ENCODE measurements at regions of chr16 and their contacts with region 1.

Region 1: GRCh38 chr16:49491771-49492761 is 118.5 kb downstream of the C16orf78 start:
- DNase-seq: peak; percentile 51 to 63
- ATAC-seq: peak; percentile 78 to 92 (median 86)
- H3K4me3 ChIP-seq: peak overlapping the region in 9 of 10 donors; percentile 26 to 57 (median 45)
- H3K27ac ChIP-seq: peak overlapping the region in 7 of 10 donors; percentile 38 to 72 (median 59)
- H3K4me1 ChIP-seq: peaks cover 2 to 17% (median 13%) of the 10 kb centered on the region in 9 donors
- H3K27me3 ChIP-seq: peaks cover 0 to 3% (median 0%) of the 10 kb centered on the region in 7 donors
- CTCF ChIP-seq: peak; percentile 91 to 99 (median 98)

Region 2: DNA sequence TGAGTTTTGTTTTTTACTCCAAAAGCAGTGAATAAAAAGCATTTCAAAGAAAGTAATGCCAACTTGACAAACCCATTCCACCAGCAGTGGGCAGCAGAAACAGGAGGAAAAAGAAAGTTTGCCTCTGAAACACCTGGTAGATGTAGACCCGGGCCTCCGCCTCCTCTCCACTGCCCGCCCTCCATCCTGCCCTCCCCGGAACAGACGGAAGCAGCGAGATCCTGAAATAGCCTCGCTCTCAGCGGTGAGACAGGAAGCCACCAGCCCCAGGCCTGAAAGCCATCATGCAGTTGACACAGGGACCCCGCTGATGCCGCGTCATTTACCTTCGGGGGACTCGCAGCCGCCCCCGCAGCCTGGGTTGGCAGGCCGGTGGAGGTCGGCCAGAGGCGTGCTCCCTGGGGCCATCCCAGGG is 50.7 kb before region 1 on chr16:
- intact Hi-C with region 1: loop called in 1 of 10 experiments (anchors 5 kb)
- DNase-seq: peak; percentile 41 to 77
- ATAC-seq: peak; percentile 68 to 96 (median 92)
- H3K4me3 ChIP-seq: peak overlapping the region in 5 of 10 donors; percentile 13 to 32 (median 19)
- H3K27ac ChIP-seq: peak overlapping the region; percentile 6 to 86 (median 68)
- H3K4me1 ChIP-seq: peaks cover 0 to 44% (median 16%) of the 10 kb centered on the region in 9 donors
- H3K27me3 ChIP-seq: peaks cover 0 to 11% (median 0%) of the 10 kb centered on the region in 7 donors
- CTCF ChIP-seq: peak in 7 of 9 donors; percentile 17 to 65 (median 43)

Region 3: DNA sequence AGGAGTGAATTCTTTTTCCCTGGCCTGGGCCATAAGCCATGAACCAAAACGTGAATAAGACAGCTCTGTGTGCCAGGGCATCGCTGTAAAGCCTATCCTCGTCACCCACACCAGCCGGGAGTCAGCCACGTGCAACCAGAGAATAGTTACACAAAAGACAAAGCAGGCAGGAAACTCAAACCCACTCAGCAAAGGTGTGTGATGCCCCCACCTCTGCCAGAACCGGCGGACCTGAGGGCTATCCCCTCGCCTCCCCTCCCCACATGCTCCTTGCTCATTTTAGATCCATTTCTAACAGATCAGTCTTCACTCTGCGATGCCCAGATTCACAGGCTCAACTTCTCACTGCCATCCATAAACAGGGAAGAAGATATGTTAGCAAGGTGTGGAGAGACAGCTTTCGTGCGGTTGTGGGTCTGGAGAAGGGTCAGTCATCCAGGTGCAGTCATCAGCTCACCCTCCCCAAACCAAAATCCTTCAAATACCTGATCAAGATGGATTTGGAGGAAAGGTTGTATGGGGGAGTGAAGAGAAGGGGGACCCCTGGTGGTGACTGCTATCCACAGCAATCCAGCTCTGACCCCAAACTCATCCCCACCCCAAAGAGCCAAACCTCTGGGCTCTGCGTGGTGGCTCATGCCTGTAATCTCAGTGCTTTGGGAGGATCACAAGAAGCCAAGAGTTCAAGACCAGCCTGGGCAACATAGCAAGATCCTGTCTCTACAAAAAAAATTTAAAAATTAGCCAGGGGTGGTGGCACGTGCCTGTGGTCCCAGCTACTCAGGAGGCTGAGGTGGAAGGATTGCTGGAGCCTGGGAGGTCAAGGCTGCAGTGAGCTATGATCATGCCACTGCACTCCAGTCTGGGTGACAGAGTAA is 100.7 kb after region 1 on chr16:
- intact Hi-C with region 1: loop called in 8 of 10 experiments (anchors 2 to 10 kb)
- DNase-seq: peak in 1 of 2 donors; percentile 18
- ATAC-seq: peak in 4 of 8 donors; percentile 54 to 62 (median 60)
- H3K4me3 ChIP-seq: no peak overlapping the region
- H3K27ac ChIP-seq: no peak overlapping the region
- H3K4me1 ChIP-seq: peaks cover 0 to 42% (median 20%) of the 10 kb centered on the region in 9 donors
- H3K27me3 ChIP-seq: peaks cover 0 to 5% (median 0%) of the 10 kb centered on the region in 7 donors
- CTCF ChIP-seq: peak; percentile 53 to 82 (median 79)

Region 4: GRCh38 chr16:49755313-49755620 is 263.2 kb after region 1 on chr16:
- intact Hi-C with region 1: loop called in 3 of 10 experiments (anchors 10 kb)
- DNase-seq: peak in 1 of 2 donors; percentile 30
- ATAC-seq: peak; percentile 51 to 89 (median 77)
- H3K4me3 ChIP-seq: peak overlapping the region in 9 of 10 donors; percentile 30 to 56 (median 44)
- H3K27ac ChIP-seq: peak overlapping the region; percentile 43 to 90 (median 84)
- H3K4me1 ChIP-seq: peaks cover 2 to 51% (median 40%) of the 10 kb centered on the region in 9 donors
- H3K27me3 ChIP-seq: peaks cover 0 to 13% (median 0%) of the 10 kb centered on the region in 7 donors
- CTCF ChIP-seq: peak; percentile 20 to 74 (median 51)

Region 5: DNA sequence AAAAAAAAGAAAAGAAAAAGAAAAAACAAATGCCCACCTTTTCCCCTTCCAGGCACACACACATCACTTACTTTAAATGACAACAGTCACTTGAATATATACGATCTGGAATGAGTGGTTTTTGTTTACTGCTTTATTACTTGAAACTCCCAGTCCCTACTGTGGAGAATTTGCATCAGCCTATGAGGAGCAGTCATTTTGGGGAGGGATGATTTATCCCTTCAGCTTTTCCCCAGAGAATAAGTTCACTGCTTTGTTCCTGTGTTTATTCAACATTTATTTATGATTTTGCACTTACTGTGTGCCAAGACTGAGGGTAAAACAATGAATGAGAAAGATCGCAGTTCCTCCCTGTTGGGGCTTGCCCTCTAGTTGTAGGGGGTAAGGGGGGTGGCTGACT is 368.5 kb after region 1 on chr16:
- intact Hi-C with region 1: loop called in 4 of 10 experiments (anchors 5 to 10 kb)
- DNase-seq: no peak
- ATAC-seq: no peak
- H3K4me3 ChIP-seq: no peak overlapping the region
- H3K27ac ChIP-seq: no peak overlapping the region
- H3K4me1 ChIP-seq: peaks cover 0 to 30% (median 18%) of the 10 kb centered on the region in 9 donors
- H3K27me3 ChIP-seq: peaks cover 0 to 59% (median 0%) of the 10 kb centered on the region in 7 donors
- CTCF ChIP-seq: no peak

Region 6: GRCh38 chr16:49876716-49877129 is 384.7 kb after region 1 on chr16:
- intact Hi-C with region 1: loop called in 5 of 10 experiments (anchors 5 to 10 kb)
- DNase-seq: peak; percentile 58 to 84
- ATAC-seq: peak; percentile 87 to 96 (median 94)
- H3K4me3 ChIP-seq: peak overlapping the region; percentile 8 to 59 (median 45)
- H3K27ac ChIP-seq: peak overlapping the region in 1 of 10 donors; percentile 10
- H3K4me1 ChIP-seq: peaks cover 0 to 14% (median 8%) of the 10 kb centered on the region in 9 donors
- H3K27me3 ChIP-seq: peaks cover 0 to 28% (median 16%) of the 10 kb centered on the region in 7 donors
- CTCF ChIP-seq: peak; percentile 88 to 98 (median 96)

Region 7: GRCh38 chr16:49921791-49922456 is 429.9 kb after region 1 on chr16:
- intact Hi-C with region 1: loop called in 2 of 10 experiments (anchors 5 to 10 kb)
- DNase-seq: peak; percentile 43 to 65
- ATAC-seq: peak; percentile 63 to 86 (median 76)
- H3K4me3 ChIP-seq: no peak overlapping the region
- H3K27ac ChIP-seq: no peak overlapping the region
- H3K4me1 ChIP-seq: peaks cover 0 to 4% (median 0%) of the 10 kb centered on the region in 9 donors
- H3K27me3 ChIP-seq: peaks cover 0 to 19% (median 6%) of the 10 kb centered on the region in 7 donors
- CTCF ChIP-seq: peak; percentile 23 to 77 (median 69)

Measured in heart right ventricle (tissue), 16 donors.